IMR-90 (cell line): ENCODE measurements at regions of chr6 and their contacts with region 1.

Region 1: DNA sequence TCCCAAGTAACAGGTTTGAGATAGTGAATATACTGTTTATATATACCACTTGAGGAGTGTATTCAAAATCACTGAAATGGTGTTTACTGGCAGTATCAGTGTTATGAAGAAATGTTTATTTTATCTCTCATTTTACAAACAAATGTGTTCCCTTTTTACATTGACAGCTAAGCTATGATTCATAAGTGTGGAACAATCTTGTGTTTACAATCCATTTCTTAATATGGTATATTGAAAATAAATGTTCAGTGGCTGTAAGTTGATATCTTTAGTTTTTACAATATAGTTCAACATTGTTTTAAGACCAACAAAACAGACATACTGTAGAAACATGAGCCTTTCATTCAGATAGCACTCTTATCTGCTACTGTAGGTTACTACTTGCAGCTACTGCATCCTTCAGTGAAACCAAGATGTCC is 14.3 kb downstream of the PHF3 start:
- DNase-seq: peak; percentile 37
- ATAC-seq: peak; percentile 87
- H3K4me3 ChIP-seq: no peak overlapping the region
- H3K27ac ChIP-seq: no peak overlapping the region
- H3K4me1 ChIP-seq: peaks cover 2% of the 10 kb centered on the region; the same call in 1 of the 2 replicates
- H3K27me3 ChIP-seq: no peaks in the 10 kb centered on the region
- CTCF ChIP-seq: no peak
- POLR2A ChIP-seq: no peak
- RAD21 ChIP-seq: no peak

Region 2: GRCh38 chr6:63714091-63714490 is 64.2 kb after region 1 on chr6:
- CTCF ChIA-PET with region 1: no interaction called
- POLR2A ChIA-PET with region 1: no interaction called
- dilution Hi-C with region 1: no loop called
- in situ Hi-C with region 1: no loop called
- intact Hi-C with region 1: loop called (anchors 10 kb)
- DNase-seq: no peak
- ATAC-seq: no peak
- H3K4me3 ChIP-seq: no peak overlapping the region
- H3K27ac ChIP-seq: no peak overlapping the region
- H3K4me1 ChIP-seq: no peaks in the 10 kb centered on the region
- H3K27me3 ChIP-seq: no peaks in the 10 kb centered on the region
- CTCF ChIP-seq: no peak
- POLR2A ChIP-seq: no peak
- RAD21 ChIP-seq: no peak